RWPE1 (cell line): ENCODE measurements at regions of chr3 and their contacts with region 1.

Region 1: GRCh38 chr3:10192953-10193691 is 28.4 kb downstream of the IRAK2 start:
- DNase-seq: peak; percentile 57
- H3K27ac ChIP-seq: peak overlapping the region; percentile 92
- CTCF ChIP-seq: no peak; the same call in 1 of the 2 replicates

Region 2: GRCh38 chr3:10074666-10075065 is 118.5 kb before region 1 on chr3:
- CTCF ChIA-PET with region 1: no interaction called
- POLR2A ChIA-PET with region 1: no interaction called
- DNase-seq: no peak
- H3K27ac ChIP-seq: no peak overlapping the region
- CTCF ChIP-seq: no peak

Region 3: GRCh38 chr3:10180738-10181295 is 12.3 kb before region 1 on chr3:
- CTCF ChIA-PET with region 1: no interaction called
- POLR2A ChIA-PET with region 1: no interaction called
- DNase-seq: no peak
- H3K27ac ChIP-seq: peak overlapping the region; percentile 15; the same call in 1 of the 2 replicates
- CTCF ChIP-seq: no peak

Region 4: DNA sequence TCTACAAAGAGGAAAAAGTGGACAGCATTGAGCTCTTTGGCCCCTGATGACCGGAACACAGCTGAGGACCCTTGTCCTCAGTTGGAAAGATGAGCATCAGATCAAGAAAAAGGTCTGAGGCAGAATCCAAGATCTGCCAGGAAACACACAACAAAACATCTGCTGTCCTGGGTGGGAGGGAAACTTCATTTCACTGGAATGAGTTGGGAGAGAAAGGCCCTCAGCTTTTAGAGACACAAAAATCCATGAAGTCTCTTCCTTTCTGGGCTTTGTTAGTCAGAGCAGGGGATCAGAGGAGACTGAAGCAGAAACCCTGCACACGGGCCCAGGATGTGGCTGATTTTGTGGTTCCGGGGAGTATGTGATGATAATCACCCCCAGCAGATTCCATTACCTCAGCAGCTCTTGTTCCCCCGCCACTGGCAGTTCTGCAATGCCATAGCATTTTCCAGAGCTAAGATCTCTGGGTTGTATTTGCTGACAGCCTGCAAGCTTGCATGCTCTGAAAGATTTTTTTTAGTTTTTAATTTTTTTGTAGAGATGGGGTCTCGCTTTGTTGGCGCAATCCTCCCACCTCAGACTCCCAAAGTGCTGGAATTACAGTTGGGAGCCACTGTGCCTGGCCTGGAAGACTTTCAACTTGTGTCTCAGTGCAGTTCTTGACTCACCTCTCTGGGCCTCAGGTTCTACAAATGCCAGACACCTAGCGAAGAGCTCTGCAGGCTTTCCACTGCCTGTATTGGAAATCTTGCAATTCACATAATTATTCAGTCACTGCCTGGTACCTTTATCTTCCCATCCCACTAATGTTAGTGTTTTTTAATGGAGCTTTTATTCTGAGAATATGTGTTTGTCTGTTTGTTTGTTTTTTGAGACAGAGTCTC is 49.3 kb after region 1 on chr3:
- CTCF ChIA-PET with region 1: interaction called, 10 read pairs
- POLR2A ChIA-PET with region 1: no interaction called
- DNase-seq: no peak
- H3K27ac ChIP-seq: no peak overlapping the region
- CTCF ChIP-seq: no peak